IMR-90 (cell line): ENCODE measurements at regions of chr1 and their contacts with region 1.

Region 1: GRCh38 chr1:166395729-166396128 is 228.9 kb upstream of the FAM78B start:
- DNase-seq: no peak
- ATAC-seq: no peak
- H3K4me3 ChIP-seq: no peak overlapping the region
- H3K27ac ChIP-seq: no peak overlapping the region
- H3K4me1 ChIP-seq: no peaks in the 10 kb centered on the region
- H3K27me3 ChIP-seq: no peaks in the 10 kb centered on the region
- CTCF ChIP-seq: no peak
- POLR2A ChIP-seq: no peak
- RAD21 ChIP-seq: no peak

Region 2: DNA sequence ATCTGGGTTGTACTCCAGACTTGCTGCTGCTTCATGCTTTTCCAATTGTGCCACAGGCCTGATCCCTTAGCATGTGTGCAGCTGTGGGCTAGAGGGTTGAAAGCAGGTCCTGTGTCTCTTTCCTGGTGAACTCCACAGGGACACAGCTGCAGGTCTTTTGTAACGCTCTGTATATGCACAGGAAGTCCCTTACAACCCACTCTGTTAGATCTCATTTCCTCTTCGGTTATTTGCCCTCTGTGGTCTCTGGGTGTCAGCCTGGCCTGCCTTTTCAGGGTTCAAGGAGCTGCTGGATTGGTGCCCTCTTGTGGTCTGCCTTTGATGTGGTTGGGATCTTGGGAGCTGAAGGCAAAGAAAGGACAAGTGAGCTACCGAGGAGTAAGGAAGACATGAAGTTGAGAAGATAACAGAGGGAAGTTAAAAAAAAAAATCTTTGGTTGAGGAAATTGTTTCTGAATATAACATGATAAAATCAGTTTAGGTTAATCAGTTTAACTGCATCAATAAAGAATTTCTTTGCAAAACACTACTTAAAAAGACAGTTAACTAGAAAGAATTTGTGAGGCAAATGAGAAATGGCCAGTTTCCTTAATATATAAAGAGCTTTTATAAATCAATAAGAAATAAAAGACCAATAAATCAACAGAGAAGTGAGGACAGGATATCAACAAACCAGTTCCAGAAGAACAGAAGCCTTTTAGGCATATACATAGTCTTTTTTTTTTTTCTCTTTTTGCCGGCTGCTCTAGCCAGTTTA is 524.2 kb before region 1 on chr1:
- CTCF ChIA-PET with region 1: no interaction called
- POLR2A ChIA-PET with region 1: no interaction called
- dilution Hi-C with region 1: no loop called
- in situ Hi-C with region 1: no loop called
- intact Hi-C with region 1: no loop called
- DNase-seq: peak; percentile 54
- ATAC-seq: peak; percentile 49
- H3K4me3 ChIP-seq: no peak overlapping the region
- H3K27ac ChIP-seq: no peak overlapping the region
- H3K4me1 ChIP-seq: no peaks in the 10 kb centered on the region
- H3K27me3 ChIP-seq: no peaks in the 10 kb centered on the region
- CTCF ChIP-seq: peak; percentile 30; the same call in 1 of the 2 replicates
- POLR2A ChIP-seq: no peak
- RAD21 ChIP-seq: peak; percentile 14; the same call in 1 of the 2 replicates

Region 3: DNA sequence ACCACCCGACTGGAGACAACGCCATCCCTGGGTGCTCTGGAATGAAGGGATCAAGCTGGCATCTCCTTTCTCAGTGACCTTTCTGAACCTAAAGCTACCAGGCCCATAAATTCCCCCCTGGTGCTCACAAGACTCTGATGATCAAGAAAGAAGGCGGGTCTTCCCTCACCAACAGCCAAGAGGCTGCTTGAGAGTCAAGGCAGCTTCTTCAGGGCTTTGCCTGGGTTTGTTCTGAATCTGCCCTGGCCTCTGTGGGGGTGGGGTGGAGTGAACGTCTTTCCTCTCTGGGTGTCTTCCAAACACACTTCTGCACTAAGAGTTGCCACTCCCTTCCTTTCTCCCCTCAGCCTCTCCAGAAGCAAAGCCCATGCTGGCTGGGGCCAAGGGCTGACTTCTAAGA is 1086.5 kb after region 1 on chr1:
- CTCF ChIA-PET with region 1: no interaction called
- POLR2A ChIA-PET with region 1: no interaction called
- dilution Hi-C with region 1: no loop called
- in situ Hi-C with region 1: no loop called
- intact Hi-C with region 1: loop called (anchors 5 kb)
- DNase-seq: no peak
- ATAC-seq: no peak
- H3K4me3 ChIP-seq: no peak overlapping the region
- H3K27ac ChIP-seq: no peak overlapping the region
- H3K4me1 ChIP-seq: no peaks in the 10 kb centered on the region
- H3K27me3 ChIP-seq: peaks cover 20% of the 10 kb centered on the region; the same call in 1 of the 2 replicates
- CTCF ChIP-seq: no peak
- POLR2A ChIP-seq: no peak
- RAD21 ChIP-seq: no peak